Mammary epithelial cell (primary cell): ENCODE measurements at regions of chr5 and their contacts with region 1.

Region 1: GRCh38 chr5:51960617-51961115 is 577.4 kb downstream of the ISL1 start:
- DNase-seq: peak; percentile 17
- H3K4me3 ChIP-seq: no peak overlapping the region
- H3K27ac ChIP-seq: no peak overlapping the region
- H3K4me1 ChIP-seq: no peaks in the 10 kb centered on the region
- H3K27me3 ChIP-seq: no peaks in the 10 kb centered on the region
- CTCF ChIP-seq: peak; percentile 77 to 80

Region 2: DNA sequence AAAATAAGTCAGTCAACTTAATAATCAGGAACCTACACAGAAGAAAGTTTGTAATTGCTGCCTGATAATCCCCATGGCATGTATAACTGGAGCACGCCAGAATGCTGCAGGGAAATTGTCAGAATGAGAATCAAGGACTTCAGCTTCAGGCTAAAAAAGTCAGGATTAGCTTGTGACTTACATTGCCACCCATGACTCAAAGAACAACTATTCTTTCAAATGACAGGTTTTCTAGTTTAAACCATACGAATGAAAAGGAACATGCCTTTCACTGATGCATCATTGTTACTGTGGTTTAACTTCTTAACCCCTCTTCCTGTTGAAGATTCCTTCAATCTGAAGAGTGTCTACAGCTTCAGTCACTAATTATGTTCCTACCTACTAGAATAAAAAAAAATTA is 465.0 kb before region 1 on chr5:
- CTCF ChIA-PET with region 1: no interaction called
- dilution Hi-C with region 1: no loop called
- in situ Hi-C with region 1: no loop called
- intact Hi-C with region 1: loop called (anchors 1 kb)
- DNase-seq: peak; percentile 77
- H3K4me3 ChIP-seq: no peak overlapping the region
- H3K27ac ChIP-seq: no peak overlapping the region
- H3K4me1 ChIP-seq: peaks cover 18% of the 10 kb centered on the region
- H3K27me3 ChIP-seq: no peaks in the 10 kb centered on the region
- CTCF ChIP-seq: no peak

Region 3: DNA sequence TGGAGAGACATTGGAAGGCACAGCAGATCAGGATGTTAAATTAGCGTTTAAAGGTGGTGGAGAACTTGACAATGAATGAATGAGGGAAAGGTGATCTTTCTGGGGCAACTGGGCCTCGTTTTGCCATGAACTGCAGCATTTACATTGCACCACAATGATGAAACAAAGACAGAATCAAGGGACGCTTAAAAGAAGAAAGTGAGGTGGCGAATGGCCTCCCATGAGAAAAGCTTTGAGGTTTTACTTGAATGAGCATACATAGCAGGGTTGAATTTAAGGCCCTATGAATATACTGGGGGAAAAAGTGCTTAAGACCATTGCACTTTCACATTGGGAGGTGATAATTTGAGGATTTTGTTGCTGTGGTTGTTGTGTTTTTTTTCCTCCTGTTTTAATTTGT is 101.0 kb before region 1 on chr5:
- CTCF ChIA-PET with region 1: no interaction called
- dilution Hi-C with region 1: no loop called
- in situ Hi-C with region 1: no loop called
- intact Hi-C with region 1: loop called (anchors 10 kb)
- DNase-seq: no peak
- H3K4me3 ChIP-seq: no peak overlapping the region
- H3K27ac ChIP-seq: no peak overlapping the region
- H3K4me1 ChIP-seq: no peaks in the 10 kb centered on the region
- H3K27me3 ChIP-seq: no peaks in the 10 kb centered on the region
- CTCF ChIP-seq: no peak